ENCODE measurements at regions of chr12 and their contacts with region 1.

Region 1: GRCh38 chr12:15584366-15585041 is 204.7 kb downstream of the EPS8 start:
- DNase-seq: peak; percentile 65
- H3K4me3 ChIP-seq: no peak overlapping the region
- H3K27ac ChIP-seq: no peak overlapping the region
- H3K4me1 ChIP-seq: no peaks in the 10 kb centered on the region
- H3K27me3 ChIP-seq: no peaks in the 10 kb centered on the region
- CTCF ChIP-seq: peak; percentile 87

Region 2: DNA sequence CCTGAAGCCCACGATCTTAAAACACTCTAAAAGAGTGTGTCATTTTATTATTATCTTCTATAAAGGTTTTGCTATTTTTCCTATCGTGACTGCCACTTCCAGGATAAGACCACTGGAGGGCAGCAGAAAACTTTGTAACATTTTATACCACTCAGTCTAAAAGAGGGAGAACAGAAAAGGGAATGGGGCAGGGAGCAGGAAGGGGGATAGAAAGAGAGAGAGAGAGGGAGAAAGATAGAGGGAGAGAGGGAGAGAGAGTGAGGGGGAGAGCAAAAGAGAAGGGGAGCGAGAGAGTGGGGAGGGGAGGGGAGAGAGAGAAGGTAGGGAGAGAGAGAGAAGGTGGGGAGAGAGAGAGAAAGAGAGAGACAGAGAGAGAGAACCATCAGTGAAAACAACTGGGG is 739.2 kb before region 1 on chr12:
- CTCF ChIA-PET with region 1: no interaction called
- POLR2A ChIA-PET with region 1: no interaction called
- intact Hi-C with region 1: no loop called
- DNase-seq: peak; percentile 79
- H3K4me3 ChIP-seq: no peak overlapping the region
- H3K27ac ChIP-seq: no peak overlapping the region
- H3K4me1 ChIP-seq: no peaks in the 10 kb centered on the region
- H3K27me3 ChIP-seq: no peaks in the 10 kb centered on the region
- CTCF ChIP-seq: peak; percentile 84

Region 3: DNA sequence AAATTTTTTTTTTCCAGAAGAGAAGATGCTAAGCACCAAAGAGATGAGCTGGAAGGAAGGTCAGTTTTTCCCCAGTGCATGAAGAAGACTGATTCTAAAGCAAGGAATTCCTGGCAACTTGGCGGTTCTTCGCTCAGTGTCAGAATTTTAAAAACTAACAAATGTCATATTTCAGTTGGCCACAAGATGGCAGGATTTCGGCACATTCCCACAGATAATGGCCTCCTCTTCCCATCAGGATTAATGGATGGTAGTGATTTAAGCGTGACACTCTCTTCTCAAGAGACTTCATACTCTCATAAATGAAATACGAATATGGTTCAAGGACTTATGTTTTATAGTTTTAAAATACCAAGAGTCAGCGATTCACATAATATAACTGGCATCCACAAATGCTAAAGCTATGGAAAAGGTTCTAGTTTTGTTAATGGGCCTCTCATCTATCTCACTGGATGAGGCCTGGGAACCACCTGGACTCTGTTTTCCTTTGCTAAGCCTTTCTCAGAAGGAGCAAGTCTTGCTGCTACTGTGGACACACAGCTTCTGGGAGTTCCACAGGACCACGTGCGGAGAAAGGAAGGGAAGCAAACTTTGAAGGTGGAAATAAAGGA is 308.3 kb before region 1 on chr12:
- CTCF ChIA-PET with region 1: no interaction called
- POLR2A ChIA-PET with region 1: no interaction called
- intact Hi-C with region 1: loop called (anchors 5 kb)
- DNase-seq: peak; percentile 70
- H3K4me3 ChIP-seq: no peak overlapping the region
- H3K27ac ChIP-seq: no peak overlapping the region
- H3K4me1 ChIP-seq: peaks cover 37% of the 10 kb centered on the region
- H3K27me3 ChIP-seq: no peaks in the 10 kb centered on the region
- CTCF ChIP-seq: peak; percentile 74

Region 4: DNA sequence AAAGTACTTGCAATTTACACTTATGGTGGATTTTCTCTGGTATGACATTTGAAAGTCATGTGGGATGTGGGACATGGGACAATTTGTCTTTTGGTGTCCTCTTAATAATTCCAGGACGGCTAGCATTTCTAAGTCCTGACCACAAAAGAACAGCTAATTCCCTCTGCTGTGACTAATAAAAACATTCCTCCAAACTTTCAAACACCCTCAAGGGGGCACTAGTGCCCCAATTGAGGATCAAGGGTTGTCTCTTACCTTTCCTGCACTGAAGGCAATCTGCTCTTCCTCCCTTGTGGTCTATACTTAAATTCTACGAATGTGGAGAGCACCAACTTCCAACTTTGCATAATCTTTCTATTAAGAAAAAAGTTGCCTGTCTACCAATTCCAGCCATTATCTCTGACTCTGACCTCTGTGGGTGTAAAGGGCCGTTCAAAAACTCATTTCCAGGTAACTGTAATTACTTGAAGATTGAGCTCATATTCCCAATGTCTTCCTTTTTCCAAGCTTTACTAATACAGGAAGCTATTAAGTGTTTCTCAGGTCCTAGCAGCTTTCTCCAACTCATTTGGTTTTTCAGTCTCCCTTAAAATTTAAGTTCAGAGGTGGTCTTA is 52.0 kb before region 1 on chr12:
- CTCF ChIA-PET with region 1: interaction called, 32 read pairs
- POLR2A ChIA-PET with region 1: no interaction called
- intact Hi-C with region 1: loop called (anchors 1 kb)
- DNase-seq: peak; percentile 84
- H3K4me3 ChIP-seq: no peak overlapping the region
- H3K27ac ChIP-seq: no peak overlapping the region
- H3K4me1 ChIP-seq: no peaks in the 10 kb centered on the region
- H3K27me3 ChIP-seq: no peaks in the 10 kb centered on the region
- CTCF ChIP-seq: peak; percentile 70

Region 5: DNA sequence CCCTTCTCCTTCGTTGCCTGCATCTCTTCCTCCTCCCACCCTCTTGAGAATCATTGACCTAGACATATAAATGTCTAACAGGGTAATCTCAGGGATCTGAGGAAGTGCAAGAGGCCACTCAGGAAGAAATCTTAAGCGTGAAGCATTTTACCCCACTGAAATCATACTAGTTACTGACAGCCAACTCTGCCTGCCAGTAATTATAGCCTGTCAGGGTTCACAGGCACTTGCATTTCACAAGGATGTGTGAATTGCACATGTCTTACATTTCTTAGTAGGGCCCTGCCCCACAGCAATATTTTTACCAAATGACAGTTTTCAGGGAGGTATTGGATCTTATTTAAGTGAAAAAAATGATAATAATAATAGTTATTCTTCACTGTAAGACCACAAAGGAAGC is 565.8 kb after region 1 on chr12:
- CTCF ChIA-PET with region 1: interaction called, 13 read pairs
- POLR2A ChIA-PET with region 1: no interaction called
- intact Hi-C with region 1: no loop called
- DNase-seq: peak; percentile 12
- H3K4me3 ChIP-seq: no peak overlapping the region
- H3K27ac ChIP-seq: no peak overlapping the region
- H3K4me1 ChIP-seq: peaks cover 42% of the 10 kb centered on the region
- H3K27me3 ChIP-seq: peaks cover 17% of the 10 kb centered on the region
- CTCF ChIP-seq: no peak